A549 (cell line): ENCODE measurements at regions of chr2 and their contacts with region 1.

Region 1: DNA sequence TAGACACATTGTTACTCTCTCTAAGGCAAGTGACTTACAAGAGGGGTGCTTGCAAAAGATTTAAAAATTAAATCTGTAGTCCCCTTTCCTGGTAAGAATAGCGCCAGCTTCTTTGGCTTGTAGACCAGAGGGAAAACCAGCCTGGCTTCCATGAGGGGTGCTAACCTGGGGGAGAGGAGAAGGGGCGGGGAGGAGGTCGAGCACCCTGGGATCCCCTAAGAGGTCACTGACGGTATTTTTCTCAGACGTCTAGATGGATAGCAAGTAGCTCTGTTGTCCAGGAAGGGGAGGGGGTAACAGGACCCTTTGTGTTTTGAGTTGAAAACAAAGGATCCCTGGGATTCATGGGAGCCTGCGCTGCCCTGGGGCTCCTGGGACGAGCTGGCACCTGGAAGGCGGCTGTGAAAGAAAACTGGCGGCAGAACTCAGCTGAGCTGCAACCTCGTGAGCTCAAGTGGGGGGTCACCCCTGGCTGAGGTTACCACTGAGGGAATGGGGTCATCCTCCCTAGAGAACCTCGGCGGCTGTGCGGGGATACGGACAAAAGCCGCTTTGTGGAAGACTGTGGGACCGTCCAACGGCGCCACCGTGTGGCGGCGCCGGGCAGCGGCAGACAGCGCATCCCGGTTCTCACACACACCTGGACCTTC is 37.8 kb upstream of the MRPL19 start:
- DNase-seq: peak; percentile 53 to 78
- ATAC-seq: peak; percentile 79 to 92
- H3K4me3 ChIP-seq: peak overlapping the region; percentile 36
- H3K27ac ChIP-seq: peak overlapping the region; percentile 49 to 76; a peak in 4 of 6 replicates
- H3K4me1 ChIP-seq: peaks cover 37% of the 10 kb centered on the region
- CTCF ChIP-seq: peak; percentile 98
- EP300 ChIP-seq: no peak
- POLR2A ChIP-seq: no peak
- RAD21 ChIP-seq: peak; percentile 87 to 97

Region 2: DNA sequence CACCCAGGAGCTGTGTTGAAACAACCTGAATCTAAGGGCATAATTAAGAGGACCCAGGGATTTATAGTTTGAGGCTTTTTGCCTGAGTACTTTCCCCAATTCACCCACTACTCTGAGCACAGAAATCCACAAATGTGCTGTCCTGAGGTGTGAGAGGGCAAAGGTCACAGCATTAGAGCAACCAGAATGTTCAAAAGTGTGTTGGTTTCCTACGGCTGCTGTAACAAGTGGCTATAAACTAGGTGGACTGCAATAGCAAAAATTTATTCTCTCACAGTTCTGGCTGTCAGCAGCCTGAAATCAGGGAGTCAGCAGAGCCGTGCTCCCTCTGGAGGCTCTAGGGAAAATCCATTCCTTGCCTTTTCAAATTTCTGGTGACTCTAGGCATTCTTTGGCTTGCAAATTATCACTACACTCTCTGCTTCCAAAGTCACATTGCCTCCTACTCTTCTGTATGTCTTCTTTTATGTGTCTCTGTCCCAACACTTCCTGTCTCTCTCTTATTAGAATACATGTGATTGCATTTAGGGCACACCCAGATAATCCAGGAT is 318.1 kb before region 1 on chr2:
- CTCF ChIA-PET with region 1: no interaction called
- POLR2A ChIA-PET with region 1: no interaction called
- DNase-seq: peak in 1 of 2 experiments; percentile 18
- ATAC-seq: peak; percentile 72 to 78
- H3K4me3 ChIP-seq: no peak overlapping the region
- H3K27ac ChIP-seq: no peak overlapping the region
- H3K4me1 ChIP-seq: 0 out of 3 replicates have a peak, but pooled peaks cover 9% of the 10 kb centered on the region
- CTCF ChIP-seq: peak; percentile 45
- EP300 ChIP-seq: no peak
- POLR2A ChIP-seq: no peak
- RAD21 ChIP-seq: peak; percentile 44 to 52; a peak in 3 of 5 replicates

Region 3: GRCh38 chr2:75458201-75458600 is 150.6 kb before region 1 on chr2:
- CTCF ChIA-PET with region 1: interaction called, 139 read pairs
- POLR2A ChIA-PET with region 1: no interaction called
- DNase-seq: no peak
- ATAC-seq: no peak
- H3K4me3 ChIP-seq: no peak overlapping the region
- H3K27ac ChIP-seq: no peak overlapping the region
- H3K4me1 ChIP-seq: no peaks in the 10 kb centered on the region
- CTCF ChIP-seq: no peak
- EP300 ChIP-seq: no peak
- POLR2A ChIP-seq: no peak
- RAD21 ChIP-seq: no peak

Region 4: DNA sequence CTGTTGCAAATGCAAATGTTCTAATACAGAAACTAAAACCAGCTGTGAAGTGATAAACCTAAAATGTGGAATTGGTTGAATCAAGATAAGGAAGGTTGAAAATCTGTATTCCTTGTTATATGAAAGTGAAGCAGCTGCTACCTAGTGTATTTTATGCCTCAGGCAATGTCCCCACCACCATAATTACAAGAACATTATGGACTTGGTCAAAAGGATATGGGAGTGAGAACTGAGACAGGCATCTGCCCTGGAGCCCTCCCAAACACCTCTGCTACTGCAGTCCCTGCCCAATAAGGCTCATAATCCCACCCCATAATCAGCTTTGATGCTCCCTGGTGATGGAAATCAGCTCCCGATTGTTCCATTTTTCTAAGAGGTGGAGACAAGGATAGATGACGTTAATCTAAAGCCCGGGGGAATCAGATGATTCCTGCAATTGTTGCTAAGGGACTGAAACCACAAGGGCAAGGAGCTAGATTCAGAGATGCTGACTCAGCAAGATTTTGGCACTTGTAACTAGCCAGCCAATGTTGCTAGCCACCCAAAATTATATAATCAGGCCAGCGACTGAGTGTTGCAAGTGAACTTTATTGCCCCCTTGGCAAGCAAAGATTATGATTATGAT is 117.6 kb before region 1 on chr2:
- CTCF ChIA-PET with region 1: interaction called, 13 read pairs
- POLR2A ChIA-PET with region 1: no interaction called
- DNase-seq: no peak
- ATAC-seq: no peak
- H3K4me3 ChIP-seq: no peak overlapping the region
- H3K27ac ChIP-seq: no peak overlapping the region
- H3K4me1 ChIP-seq: no peaks in the 10 kb centered on the region
- CTCF ChIP-seq: no peak
- EP300 ChIP-seq: no peak
- POLR2A ChIP-seq: no peak
- RAD21 ChIP-seq: no peak

Region 5: DNA sequence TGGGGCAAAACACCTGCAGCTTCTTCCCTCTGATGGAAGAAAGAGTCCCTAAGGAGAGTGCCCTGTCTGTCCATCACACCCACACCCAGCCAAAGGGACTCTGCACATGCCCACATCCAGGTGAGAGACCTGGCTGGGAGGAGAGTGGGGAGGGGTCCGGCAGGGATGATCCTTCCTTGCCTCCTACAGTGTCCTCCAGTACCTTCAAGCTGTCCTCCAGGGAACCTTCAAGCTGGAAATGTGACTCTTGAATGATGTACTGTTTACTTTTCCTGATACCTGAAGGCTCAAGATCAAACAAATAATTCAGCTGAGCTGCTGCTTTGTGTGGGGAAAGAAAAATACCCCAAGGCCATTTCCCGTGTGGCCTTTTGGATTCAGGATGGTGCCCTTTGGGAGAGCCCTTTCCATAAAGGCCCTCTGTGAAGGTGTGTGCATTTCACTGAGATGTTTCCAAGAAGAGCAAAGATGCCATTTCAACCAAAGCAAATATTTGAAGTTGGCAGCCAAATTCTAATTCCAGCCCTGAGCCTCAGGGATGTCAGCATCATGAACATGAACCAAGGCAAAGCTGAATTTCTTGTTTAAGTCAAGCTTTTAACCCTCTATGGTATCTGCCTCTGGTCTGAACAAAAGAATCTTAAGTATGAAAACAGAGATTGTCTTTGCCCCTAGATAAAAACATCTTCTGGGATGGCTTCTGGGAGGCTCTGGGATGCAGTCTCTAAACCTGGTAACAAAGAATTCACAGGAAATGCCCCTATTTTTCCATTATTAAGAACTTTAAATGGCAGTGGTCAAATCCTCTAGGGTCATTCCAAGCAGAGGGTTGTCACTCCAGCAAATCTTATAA is 59.2 kb before region 1 on chr2:
- CTCF ChIA-PET with region 1: interaction called, 18 read pairs
- POLR2A ChIA-PET with region 1: no interaction called
- DNase-seq: no peak
- ATAC-seq: no peak
- H3K4me3 ChIP-seq: no peak overlapping the region
- H3K27ac ChIP-seq: 0 out of 6 replicates have a peak overlapping the region, but pooled peaks of 1 of the 2 experiments have one; percentile 12
- H3K4me1 ChIP-seq: peaks cover 21% of the 10 kb centered on the region
- CTCF ChIP-seq: no peak
- EP300 ChIP-seq: no peak
- POLR2A ChIP-seq: no peak
- RAD21 ChIP-seq: no peak

Region 6: DNA sequence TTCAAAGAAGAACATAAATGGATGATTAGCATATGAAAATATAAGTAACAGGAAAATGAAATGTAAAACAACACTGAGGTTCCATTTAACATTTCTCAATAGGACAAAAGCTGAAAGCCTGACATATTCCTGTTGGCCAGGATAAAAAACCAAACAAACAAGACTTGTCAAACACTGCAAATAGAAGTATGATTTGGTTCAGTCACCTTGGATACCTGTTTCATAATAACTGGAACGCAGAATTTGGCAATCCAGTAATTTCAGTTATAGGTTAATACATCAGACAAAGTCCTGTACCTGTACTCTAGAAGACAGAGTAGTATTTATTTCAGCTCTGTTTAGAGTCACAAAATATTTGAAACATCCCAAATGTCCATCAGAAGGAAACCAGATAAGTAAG is 31.5 kb before region 1 on chr2:
- CTCF ChIA-PET with region 1: interaction called, 51 read pairs
- POLR2A ChIA-PET with region 1: interaction called, 4 read pairs
- DNase-seq: no peak
- ATAC-seq: no peak
- H3K4me3 ChIP-seq: no peak overlapping the region
- H3K27ac ChIP-seq: no peak overlapping the region
- H3K4me1 ChIP-seq: no peaks in the 10 kb centered on the region
- CTCF ChIP-seq: no peak
- EP300 ChIP-seq: no peak
- POLR2A ChIP-seq: no peak
- RAD21 ChIP-seq: no peak

Region 7: DNA sequence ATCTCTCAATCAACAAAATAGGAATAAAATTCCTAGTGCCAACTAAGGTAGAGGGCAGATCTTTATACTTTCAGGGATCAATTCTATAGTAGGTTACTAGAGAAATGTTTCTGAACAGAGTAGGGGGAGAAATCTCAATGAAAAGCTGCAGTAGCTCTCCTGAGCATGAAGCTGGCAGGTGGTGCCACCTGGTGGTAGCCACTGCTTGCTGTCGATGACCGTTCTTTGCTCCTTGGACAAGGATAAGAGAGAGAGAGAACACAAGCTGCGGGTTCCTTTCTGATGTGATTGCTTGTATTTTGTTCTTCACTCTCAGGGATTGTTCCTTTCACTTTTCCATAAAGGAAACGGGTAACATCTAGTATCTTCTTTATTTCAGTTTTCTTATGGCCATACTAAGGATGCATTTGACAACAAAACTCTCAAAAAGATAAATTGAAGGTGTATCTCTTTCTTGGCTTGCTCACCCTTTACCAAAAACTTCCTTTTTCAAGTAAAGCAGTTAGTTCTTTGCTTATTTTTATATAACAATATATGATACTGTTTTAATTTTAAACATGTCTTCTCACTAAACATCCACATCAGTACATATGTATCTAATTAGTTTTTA is 19.2 kb after region 1 on chr2:
- CTCF ChIA-PET with region 1: interaction called, 28 read pairs
- POLR2A ChIA-PET with region 1: no interaction called
- DNase-seq: peak; percentile 80 to 82
- ATAC-seq: peak; percentile 95 to 97
- H3K4me3 ChIP-seq: no peak overlapping the region
- H3K27ac ChIP-seq: no peak overlapping the region
- H3K4me1 ChIP-seq: no peaks in the 10 kb centered on the region
- CTCF ChIP-seq: peak; percentile 97
- EP300 ChIP-seq: no peak
- POLR2A ChIP-seq: no peak
- RAD21 ChIP-seq: peak; percentile 85 to 92